ENCODE measurements at regions of chr2 and their contacts with region 1.

Region 1: DNA sequence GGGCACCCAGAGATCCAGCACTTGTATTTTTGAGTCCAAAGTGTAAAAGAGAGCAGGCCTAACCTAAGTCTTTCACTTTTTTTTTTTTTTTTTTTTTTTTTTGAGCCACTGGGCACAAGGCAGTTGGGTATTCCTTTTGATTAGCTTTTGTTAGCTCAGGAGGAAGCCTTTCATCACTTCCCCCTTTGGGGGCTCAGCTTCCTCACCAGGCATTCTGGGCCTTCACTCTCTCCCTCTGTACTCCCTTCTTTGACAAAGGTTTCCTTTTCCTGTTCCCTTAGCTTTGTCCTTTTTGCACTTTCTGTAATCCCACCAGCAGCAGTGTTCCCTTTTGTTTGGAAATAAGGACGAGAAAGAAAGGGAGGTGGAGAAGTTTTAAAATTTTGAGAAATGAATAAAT is 88.2 kb downstream of the PKP4 start:
- DNase-seq: no peak
- ATAC-seq: no peak
- H3K4me3 ChIP-seq: no peak overlapping the region
- H3K27ac ChIP-seq: no peak overlapping the region
- H3K4me1 ChIP-seq: peaks cover 2% of the 10 kb centered on the region
- H3K27me3 ChIP-seq: no peaks in the 10 kb centered on the region
- CTCF ChIP-seq: no peak

Region 2: GRCh38 chr2:158403237-158403636 is 141.8 kb before region 1 on chr2:
- CTCF ChIA-PET with region 1: interaction called, 11 read pairs
- POLR2A ChIA-PET with region 1: no interaction called
- intact Hi-C with region 1: no loop called
- DNase-seq: no peak
- ATAC-seq: no peak
- H3K4me3 ChIP-seq: no peak overlapping the region
- H3K27ac ChIP-seq: no peak overlapping the region
- H3K4me1 ChIP-seq: no peaks in the 10 kb centered on the region
- H3K27me3 ChIP-seq: peaks cover 7% of the 10 kb centered on the region; the same call in 1 of the 2 replicates
- CTCF ChIP-seq: no peak

Measured in PC-3 (cell line).